ENCODE measurements at regions of chr9 and their contacts with region 1.

Region 1: DNA sequence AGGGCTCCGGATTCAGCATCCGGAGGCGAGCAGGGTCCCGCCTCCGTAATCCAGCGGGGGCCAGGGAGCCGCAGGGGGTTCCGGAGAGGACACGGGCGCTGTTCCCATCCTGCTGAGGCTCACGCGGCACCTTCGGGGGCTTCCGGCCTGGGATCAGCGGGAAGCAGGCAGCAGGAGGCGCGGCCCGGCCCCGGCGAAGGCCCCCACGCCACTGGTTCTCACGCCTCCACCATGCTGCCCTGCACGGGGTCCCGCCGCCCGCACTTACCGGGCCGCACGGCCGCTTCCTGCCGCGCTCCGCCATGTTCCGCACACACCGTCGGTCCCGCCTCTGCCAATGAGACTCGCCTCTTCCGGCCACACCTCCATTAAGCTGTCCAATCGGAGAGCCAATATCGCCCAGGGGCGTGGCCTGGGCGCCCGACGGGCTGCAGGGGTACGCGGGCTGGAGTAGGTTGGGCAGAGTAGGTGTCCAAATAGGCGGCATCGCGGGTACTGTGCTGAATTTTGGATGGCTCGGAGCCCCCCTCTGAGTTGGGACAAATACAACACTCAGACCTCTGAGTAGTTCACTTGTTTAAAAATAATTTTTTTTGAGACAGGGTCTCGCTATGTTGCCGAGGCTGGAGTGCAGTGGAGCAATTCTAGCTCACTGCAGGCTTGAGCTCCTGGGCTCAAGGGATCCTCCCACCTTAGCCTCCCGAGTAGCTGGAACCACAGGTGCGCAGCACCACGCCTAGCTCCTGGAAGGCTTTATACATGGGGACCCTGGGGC is at the start of gene SPOUT1:
- DNase-seq: peak; percentile 78 to 97
- H3K4me3 ChIP-seq: peak within 1 kb of the TSS; percentile 80 to 94
- H3K27ac ChIP-seq: peak within 1 kb of the TSS; percentile 81 to 90
- H3K4me1 ChIP-seq: peaks cover 11 to 12% of the 10 kb centered on the region in 2 donors
- H3K27me3 ChIP-seq: no peaks in the 10 kb centered on the region
- CTCF ChIP-seq: no peak
- total RNA-seq, gene SPOUT1: 26.5 TPM

Region 2: DNA sequence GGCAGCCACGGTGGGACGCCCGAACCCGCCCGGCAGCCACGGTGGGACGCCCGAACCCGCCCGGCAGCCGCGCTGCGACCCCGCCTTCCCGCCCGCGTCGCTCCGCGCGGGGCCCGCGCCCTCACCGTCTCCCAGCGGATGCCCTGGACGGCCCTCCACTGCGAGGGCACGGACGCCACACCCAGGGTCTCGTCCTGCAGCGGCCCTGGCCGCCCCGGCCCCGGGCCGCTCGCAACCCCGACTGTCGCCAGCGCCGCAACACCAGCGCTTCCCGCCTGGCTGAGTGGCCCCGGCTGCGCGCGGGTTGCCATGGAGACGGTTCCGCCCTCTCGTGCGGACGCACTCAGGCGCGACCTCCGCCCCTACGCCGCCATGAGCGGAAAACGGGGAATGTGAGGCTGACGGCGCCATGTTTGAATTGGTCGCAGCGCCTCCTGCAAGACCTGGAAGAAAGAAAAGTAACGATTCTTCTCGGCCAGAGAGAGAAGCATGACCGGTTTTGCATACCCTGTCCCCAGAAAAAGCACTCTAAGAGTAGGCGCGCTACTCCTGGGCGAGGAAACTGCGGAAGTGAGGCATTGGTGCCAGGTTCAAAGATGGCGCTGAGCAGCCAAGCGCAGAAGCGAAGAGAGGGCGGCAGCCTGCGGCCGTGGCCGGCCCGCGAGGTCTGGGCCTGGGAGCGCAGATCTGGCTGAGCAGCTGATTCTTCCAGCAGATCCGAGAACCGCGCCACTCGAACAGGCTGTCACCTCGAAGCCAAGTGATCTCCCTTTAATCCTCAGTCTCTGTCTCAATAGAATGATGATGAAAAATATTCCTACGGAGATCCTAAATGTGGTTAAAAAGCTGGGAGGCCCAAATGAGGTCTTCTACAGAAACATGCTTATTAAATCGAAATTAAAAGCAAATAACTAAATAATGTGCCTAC is 173.0 kb before region 1 on chr9 and contains the start of gene DYNC2I2:
- intact Hi-C with region 1: no loop called
- DNase-seq: peak; percentile 76 to 96
- H3K4me3 ChIP-seq: peak within 1 kb of the TSS; percentile 78 to 84
- H3K27ac ChIP-seq: peak within 1 kb of the TSS; percentile 91 to 96
- H3K4me1 ChIP-seq: peaks cover 0 to 4% of the 10 kb centered on the region in 2 donors
- H3K27me3 ChIP-seq: no peaks in the 10 kb centered on the region
- CTCF ChIP-seq: no peak
- total RNA-seq, gene DYNC2I2: 49.9 TPM

Region 3: GRCh38 chr9:128786681-128787601 is 42.7 kb before region 1 on chr9 and contains the start of gene TBC1D13:
- intact Hi-C with region 1: no loop called
- DNase-seq: peak; percentile 53 to 93
- H3K4me3 ChIP-seq: peak within 1 kb of the TSS; percentile 59 to 97
- H3K27ac ChIP-seq: peak within 1 kb of the TSS; percentile 78 to 83
- H3K4me1 ChIP-seq: peaks cover 4 to 6% of the 10 kb centered on the region in 2 donors
- H3K27me3 ChIP-seq: no peaks in the 10 kb centered on the region
- CTCF ChIP-seq: no peak
- total RNA-seq, gene TBC1D13: 19.8 TPM

Region 4: GRCh38 chr9:128818099-128818838 is 11.4 kb before region 1 on chr9 and contains the start of gene ENDOG:
- intact Hi-C with region 1: loop called (anchors 1 kb)
- DNase-seq: peak; percentile 91 to 99
- H3K4me3 ChIP-seq: peak within 1 kb of the TSS; percentile 48 to 97
- H3K27ac ChIP-seq: peak within 1 kb of the TSS; percentile 80 to 84
- H3K4me1 ChIP-seq: peaks cover 3 to 6% of the 10 kb centered on the region in 2 donors
- H3K27me3 ChIP-seq: no peaks in the 10 kb centered on the region
- CTCF ChIP-seq: peak; percentile 94 to 99 (median 98)
- total RNA-seq, gene ENDOG: 59.4 TPM

Region 5: DNA sequence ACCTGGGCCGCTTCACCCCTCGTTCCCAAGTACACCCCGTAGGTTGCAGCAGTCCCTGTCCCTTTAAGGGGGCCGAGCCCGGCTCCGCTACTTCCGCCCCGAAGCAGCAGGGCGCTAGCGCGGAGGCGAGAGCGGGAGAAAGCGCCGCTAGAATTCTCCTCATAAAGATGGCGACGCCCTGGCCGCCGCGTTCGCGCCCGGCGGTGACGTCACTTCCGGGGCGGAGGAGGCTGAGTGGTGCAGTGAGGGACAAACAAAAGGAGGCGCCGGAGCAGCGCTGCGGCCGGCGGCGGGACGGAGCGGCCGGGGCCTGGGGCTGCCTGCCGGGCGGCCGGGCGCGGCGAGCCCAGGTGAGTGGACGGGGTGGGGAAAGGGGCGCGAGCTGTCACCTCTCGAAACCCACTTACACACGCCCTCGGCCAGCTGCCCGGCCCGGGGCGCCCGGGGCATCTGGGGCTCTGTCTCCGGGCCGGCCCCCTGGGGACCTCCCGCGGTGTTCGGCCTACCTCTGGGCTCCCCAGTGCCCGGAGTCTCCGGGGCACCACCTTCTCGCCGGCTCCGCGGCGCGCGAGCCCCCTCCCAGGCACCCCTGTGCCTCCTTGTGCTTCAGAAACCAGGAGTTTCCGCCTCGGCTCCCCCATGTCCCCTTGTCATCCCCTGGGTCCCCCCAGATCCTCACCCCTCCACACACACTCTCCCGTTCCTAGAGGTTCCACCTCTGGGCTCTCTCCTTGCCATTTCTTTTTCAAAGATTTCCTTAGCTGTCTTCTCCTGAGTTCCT is 52.4 kb after region 1 on chr9 and contains the starts of genes KYAT1 and LRRC8A:
- intact Hi-C with region 1: loop called (anchors 2 kb)
- DNase-seq: peak; percentile 93 to 99
- H3K4me3 ChIP-seq: peak within 1 kb of the TSS; percentile 89 to 90
- H3K27ac ChIP-seq: peak within 1 kb of the TSS; percentile 96 to 98
- H3K4me1 ChIP-seq: peaks cover 25 to 46% of the 10 kb centered on the region in 2 donors
- H3K27me3 ChIP-seq: no peaks in the 10 kb centered on the region
- CTCF ChIP-seq: peak in 1 of 3 experiments; percentile 4
- total RNA-seq, gene KYAT1: 4.9 TPM
- total RNA-seq, gene LRRC8A: 227 TPM

Measured in ascending aorta (tissue), 2 donors.